HAP-1 (cell line): ENCODE measurements at regions of chr13 and their contacts with region 1.

Region 1: DNA sequence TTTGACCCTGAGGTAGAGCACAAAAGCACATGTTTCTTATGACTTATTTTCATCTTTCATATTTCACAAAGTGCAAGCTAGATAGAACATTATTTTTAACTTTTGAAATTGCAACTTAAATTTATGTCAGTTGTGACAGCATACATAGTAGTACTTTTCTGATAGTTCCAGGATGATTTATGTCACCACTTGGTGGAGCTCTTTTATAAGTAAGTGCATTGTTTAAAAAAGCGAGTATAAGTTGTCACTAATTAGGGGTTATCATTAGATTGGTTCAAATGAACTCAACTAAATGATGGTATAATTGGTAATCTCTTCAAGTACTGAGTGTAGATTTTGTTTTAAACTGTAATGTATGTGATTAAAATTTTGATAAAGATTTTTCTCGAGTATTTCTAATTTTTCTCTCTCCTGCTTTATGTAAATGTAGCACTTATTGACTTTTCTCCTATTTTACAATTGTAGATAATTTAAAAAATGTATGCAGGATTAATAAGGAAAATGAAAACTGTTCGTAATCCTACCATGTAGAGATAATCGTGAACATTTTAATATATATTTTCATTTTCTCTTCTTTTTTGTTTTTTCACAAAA is 31.1 kb downstream of the RB1 start:
- DNase-seq: peak in 1 of 2 experiments; percentile 21
- H3K4me3 ChIP-seq: no peak overlapping the region
- H3K4me1 ChIP-seq: no peaks in the 10 kb centered on the region
- H3K27me3 ChIP-seq: no peaks in the 10 kb centered on the region

Region 2: DNA sequence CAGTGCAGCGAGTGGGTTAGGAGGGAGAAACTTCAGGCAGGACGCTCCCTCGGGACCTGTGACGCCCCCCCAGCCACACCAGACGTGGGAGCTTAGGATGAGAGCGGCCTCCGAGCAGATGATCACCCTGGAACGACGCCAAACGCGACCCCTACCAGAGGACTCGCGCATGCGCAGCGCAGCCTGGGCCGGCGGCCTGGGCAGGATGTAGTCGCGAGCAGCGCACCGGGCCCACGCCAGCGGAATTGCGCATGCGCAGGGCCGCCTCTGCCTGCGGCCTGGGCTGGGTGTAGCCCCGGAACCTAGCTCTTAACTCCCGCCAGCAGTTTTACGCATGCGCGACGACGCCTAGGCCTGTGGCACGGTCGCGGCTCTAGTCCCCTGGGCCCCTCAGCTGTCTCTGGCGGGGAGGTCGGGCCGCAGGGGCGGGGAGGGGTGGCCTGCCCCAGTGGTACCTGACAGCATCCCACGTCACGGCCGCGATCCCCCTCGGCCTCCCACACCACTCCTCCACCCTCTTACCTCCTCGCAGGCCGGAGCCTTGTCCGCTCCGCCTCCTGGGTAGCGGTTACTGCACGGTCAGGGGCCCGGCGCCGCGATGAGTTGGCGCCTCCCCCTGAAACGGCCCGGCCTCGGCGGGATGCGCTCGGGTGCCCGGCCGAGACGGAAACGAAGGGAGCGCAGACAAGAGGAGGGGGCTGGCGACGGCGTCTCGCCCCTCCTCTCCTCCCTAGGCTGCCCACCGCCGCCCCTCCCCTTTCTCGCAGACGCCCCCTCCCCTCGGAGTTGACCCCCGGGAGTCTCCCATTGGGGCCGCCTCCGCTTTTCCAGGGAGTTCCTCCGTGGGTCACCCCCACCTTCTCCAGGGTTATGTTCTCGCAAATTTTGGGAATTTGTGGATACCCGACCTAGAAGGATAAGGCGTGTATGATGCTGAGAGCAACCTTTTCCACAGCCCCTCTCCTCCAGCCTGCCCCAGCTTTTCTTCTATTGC is 198.2 kb after region 1 on chr13 and contains the start of gene RCBTB2:
- in situ Hi-C with region 1: no loop called
- DNase-seq: peak; percentile 89 to 98
- H3K4me3 ChIP-seq: peak within 1 kb of the TSS; percentile 43
- H3K4me1 ChIP-seq: peaks cover 12% of the 10 kb centered on the region
- H3K27me3 ChIP-seq: no peaks in the 10 kb centered on the region; the same call in 1 of the 2 replicates

Region 3: GRCh38 chr13:48595431-48596429 is 261.1 kb after region 1 on chr13:
- in situ Hi-C with region 1: loop called (anchors 25 kb)
- DNase-seq: peak; percentile 52 to 59
- H3K4me3 ChIP-seq: no peak overlapping the region
- H3K4me1 ChIP-seq: peaks cover 43% of the 10 kb centered on the region
- H3K27me3 ChIP-seq: no peaks in the 10 kb centered on the region